Heart right ventricle (tissue), 16 donors: ENCODE measurements at regions of chr21 and their contacts with region 1.

Region 1: GRCh38 chr21:36104317-36105300 is 30.3 kb upstream of the CBR3 start:
- DNase-seq: peak; percentile 21 to 50
- ATAC-seq: peak in 4 of 8 donors; percentile 39 to 61 (median 60)
- H3K4me3 ChIP-seq: peak overlapping the region in 5 of 10 donors; percentile 1 to 25 (median 14)
- H3K27ac ChIP-seq: no peak overlapping the region
- H3K4me1 ChIP-seq: peaks cover 0 to 11% (median 0%) of the 10 kb centered on the region in 9 donors
- H3K27me3 ChIP-seq: peaks cover 0 to 67% (median 43%) of the 10 kb centered on the region in 7 donors
- CTCF ChIP-seq: peak; percentile 24 to 69 (median 63)

Region 2: GRCh38 chr21:35963920-35964451 is 140.6 kb before region 1 on chr21:
- intact Hi-C with region 1: loop called in 1 of 10 experiments (anchors 5 kb)
- DNase-seq: no peak
- ATAC-seq: no peak
- H3K4me3 ChIP-seq: no peak overlapping the region
- H3K27ac ChIP-seq: no peak overlapping the region
- H3K4me1 ChIP-seq: no peaks in the 10 kb centered on the region
- H3K27me3 ChIP-seq: peaks cover 0 to 19% (median 5%) of the 10 kb centered on the region in 7 donors
- CTCF ChIP-seq: no peak

Region 3: GRCh38 chr21:36060159-36060921 is 44.3 kb before region 1 on chr21 and contains the start of gene SETD4:
- intact Hi-C with region 1: loop called in 3 of 10 experiments (anchors 5 to 10 kb)
- DNase-seq: peak; percentile 90 to 95
- ATAC-seq: peak; percentile 94 to 99 (median 97)
- H3K4me3 ChIP-seq: peak within 1 kb of the TSS; percentile 50 to 97 (median 74)
- H3K27ac ChIP-seq: peak within 1 kb of the TSS; percentile 91 to 100 (median 94)
- H3K4me1 ChIP-seq: peaks cover 0 to 37% (median 16%) of the 10 kb centered on the region in 9 donors
- H3K27me3 ChIP-seq: no peaks in the 10 kb centered on the region
- CTCF ChIP-seq: no peak
- total RNA-seq, gene SETD4: 7.8 to 13.1 (median 10.9) TPM

Region 4: DNA sequence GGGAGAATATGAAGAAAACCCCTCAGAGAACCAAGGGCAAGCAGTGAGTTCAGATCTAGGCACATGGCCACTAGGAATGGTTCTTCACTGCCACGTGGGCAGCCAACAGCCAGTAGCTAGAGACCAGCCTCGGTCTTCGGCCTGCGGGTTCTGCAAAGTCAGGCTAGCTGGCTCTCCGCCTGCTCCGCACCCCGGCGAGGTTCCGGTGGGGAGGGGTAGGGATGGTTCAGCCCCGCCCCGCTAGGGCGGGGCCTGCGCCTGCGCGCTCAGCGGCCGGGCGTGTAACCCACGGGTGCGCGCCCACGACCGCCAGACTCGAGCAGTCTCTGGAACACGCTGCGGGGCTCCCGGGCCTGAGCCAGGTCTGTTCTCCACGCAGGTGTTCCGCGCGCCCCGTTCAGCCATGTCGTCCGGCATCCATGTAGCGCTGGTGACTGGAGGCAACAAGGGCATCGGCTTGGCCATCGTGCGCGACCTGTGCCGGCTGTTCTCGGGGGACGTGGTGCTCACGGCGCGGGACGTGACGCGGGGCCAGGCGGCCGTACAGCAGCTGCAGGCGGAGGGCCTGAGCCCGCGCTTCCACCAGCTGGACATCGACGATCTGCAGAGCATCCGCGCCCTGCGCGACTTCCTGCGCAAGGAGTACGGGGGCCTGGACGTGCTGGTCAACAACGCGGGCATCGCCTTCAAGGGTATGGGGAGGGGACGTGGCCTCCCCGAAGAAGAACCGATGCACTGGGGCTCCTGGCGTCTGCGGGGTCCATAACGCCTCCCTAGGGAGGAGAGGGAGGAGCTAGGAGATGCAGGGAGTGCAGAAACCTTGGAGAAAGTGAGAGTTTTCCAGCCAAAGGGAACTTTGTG is 34.7 kb before region 1 on chr21 and contains the start of gene CBR1:
- intact Hi-C with region 1: loop called in 1 of 10 experiments (anchors 5 kb)
- DNase-seq: peak; percentile 88 to 97
- ATAC-seq: peak; percentile 97 to 99 (median 98)
- H3K4me3 ChIP-seq: peak within 1 kb of the TSS; percentile 24 to 87 (median 78)
- H3K27ac ChIP-seq: peak within 1 kb of the TSS; percentile 18 to 87 (median 72)
- H3K4me1 ChIP-seq: peaks cover 0 to 47% (median 9%) of the 10 kb centered on the region in 9 donors
- H3K27me3 ChIP-seq: no peaks in the 10 kb centered on the region
- CTCF ChIP-seq: peak in 1 of 9 donors; percentile 3
- total RNA-seq, gene CBR1: 7.7 to 34.8 (median 17.6) TPM